HAP-1 (cell line): ENCODE measurements at regions of chr1 and their contacts with region 1.

Region 1: GRCh38 chr1:175757381-175758015 is 14.1 kb upstream of the TNR start:
- DNase-seq: peak; percentile 48 to 77
- H3K4me3 ChIP-seq: no peak overlapping the region
- H3K4me1 ChIP-seq: no peaks in the 10 kb centered on the region
- H3K27me3 ChIP-seq: no peaks in the 10 kb centered on the region

Region 2: DNA sequence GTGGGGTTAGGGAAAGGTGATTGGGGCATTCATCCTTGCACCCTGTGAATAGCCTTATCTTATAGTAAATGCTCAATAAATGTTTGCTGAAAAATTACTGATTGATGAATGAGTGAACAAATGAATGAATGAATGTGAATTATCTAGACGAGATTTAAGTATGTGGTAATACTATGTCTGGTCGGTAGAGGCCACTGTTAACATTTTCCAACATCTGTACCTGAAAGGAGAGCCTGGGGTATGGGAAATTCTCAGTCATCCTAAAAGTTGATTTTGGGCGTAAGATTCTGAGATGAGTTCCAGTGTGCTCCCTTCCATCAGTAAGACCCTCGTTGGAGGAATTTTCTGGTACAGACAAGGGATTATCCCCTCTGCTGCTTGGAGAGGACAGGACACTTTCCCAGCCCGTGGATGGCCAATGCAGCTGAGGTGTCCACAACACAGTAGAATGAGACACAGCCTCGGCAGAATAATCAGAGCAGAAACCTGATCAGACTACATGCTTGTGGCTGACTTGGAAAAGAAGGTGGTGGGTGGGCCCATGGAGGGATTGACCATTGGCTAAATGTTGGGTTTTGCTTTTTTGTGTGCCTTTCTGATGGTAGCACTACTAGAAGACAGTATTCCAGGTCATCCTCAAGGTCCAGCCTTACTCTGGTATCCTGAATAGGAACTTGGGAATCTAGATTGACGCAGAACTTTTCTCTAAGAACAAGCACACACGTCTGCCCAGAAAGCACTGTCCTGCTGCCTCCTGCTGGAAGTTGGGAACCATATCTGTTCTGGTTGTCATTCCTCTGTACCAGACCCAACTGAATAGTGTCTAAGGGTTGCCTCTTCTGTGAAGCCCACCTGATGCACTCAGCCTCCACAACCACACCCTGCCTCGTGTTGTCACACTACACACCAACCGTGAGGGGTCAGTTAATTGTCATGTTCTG is 276.1 kb before region 1 on chr1:
- in situ Hi-C with region 1: loop called (anchors 10 kb)
- DNase-seq: peak; percentile 26 to 32
- H3K4me3 ChIP-seq: no peak overlapping the region
- H3K4me1 ChIP-seq: no peaks in the 10 kb centered on the region
- H3K27me3 ChIP-seq: 0 out of 2 replicates have a peak, but pooled peaks cover 2% of the 10 kb centered on the region

Region 3: DNA sequence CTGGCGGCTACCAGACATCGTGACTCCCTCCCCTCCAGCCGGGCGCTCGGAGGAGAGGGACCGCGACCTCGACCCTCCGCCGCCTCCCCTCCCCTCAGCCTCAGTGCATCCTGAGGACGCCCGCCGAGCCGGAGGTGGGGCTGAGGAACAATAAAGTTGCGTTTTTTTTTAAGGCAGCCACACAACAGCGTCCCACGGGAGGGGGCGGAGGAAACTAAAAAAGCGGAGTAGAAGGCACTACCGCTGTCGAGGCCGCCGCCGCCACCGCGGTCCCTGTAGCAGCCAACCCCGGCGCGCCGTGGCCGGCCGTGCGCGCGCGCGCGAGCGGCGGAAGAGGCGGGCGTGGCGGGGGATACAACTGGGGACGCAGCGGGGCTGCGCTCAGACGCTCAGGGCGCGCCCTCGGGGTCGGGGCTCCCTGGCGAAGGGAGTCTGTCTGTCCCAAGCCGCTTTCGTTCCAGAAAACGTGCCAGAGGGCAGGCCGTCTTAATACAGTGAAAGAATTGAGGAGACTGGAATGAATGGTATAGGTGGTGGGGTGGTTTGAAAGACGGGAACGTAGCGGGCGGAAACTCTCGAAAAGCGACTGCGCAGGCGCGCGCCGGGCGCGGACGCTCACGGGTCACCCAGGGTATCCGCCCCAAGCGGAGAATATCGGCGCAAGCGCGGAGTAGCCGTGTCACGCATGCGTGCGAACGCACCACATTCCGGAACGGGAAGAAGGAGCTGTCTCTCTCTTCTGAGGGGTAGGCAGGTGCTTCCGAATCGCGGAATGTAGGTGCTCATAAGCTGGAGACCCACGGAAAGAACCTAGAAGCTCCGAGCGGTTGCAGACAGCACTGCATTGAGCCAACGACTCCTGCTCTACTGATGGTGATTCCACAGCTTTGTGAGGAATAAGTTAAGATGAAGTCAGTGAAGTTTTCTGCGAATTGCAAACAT is 449.7 kb after region 1 on chr1 and contains the start of gene COP1:
- in situ Hi-C with region 1: no loop called
- DNase-seq: peak; percentile 93 to 96
- H3K4me3 ChIP-seq: peak within 1 kb of the TSS; percentile 89
- H3K4me1 ChIP-seq: peaks cover 11% of the 10 kb centered on the region
- H3K27me3 ChIP-seq: no peaks in the 10 kb centered on the region